Uterus (tissue), 4 donors: ENCODE measurements at regions of chr1 and their contacts with region 1.

Region 1: GRCh38 chr1:88655685-88656299 is 28.3 kb upstream of the PKN2 start:
- DNase-seq: no peak
- H3K4me3 ChIP-seq: no peak overlapping the region
- H3K27ac ChIP-seq: no peak overlapping the region
- H3K4me1 ChIP-seq: no peaks in the 10 kb centered on the region
- H3K27me3 ChIP-seq: no peaks in the 10 kb centered on the region
- CTCF ChIP-seq: peak; percentile 46 to 66 (median 52)
- POLR2A ChIP-seq: no peak

Region 2: GRCh38 chr1:88537787-88538186 is 118.0 kb before region 1 on chr1:
- intact Hi-C with region 1: no loop called
- DNase-seq: no peak
- H3K4me3 ChIP-seq: no peak overlapping the region
- H3K27ac ChIP-seq: no peak overlapping the region
- H3K4me1 ChIP-seq: no peaks in the 10 kb centered on the region
- H3K27me3 ChIP-seq: no peaks in the 10 kb centered on the region
- CTCF ChIP-seq: no peak
- POLR2A ChIP-seq: no peak

Region 3: GRCh38 chr1:88877382-88877825 is 221.6 kb after region 1 on chr1:
- intact Hi-C with region 1: loop called (anchors 5 kb)
- DNase-seq: no peak
- H3K4me3 ChIP-seq: no peak overlapping the region
- H3K27ac ChIP-seq: no peak overlapping the region
- H3K4me1 ChIP-seq: peaks cover 3 to 6% of the 10 kb centered on the region in 2 donors
- H3K27me3 ChIP-seq: no peaks in the 10 kb centered on the region
- CTCF ChIP-seq: peak; percentile 42 to 63 (median 51)
- POLR2A ChIP-seq: no peak